ENCODE measurements at regions of chr22 and their contacts with region 1.

Region 1: DNA sequence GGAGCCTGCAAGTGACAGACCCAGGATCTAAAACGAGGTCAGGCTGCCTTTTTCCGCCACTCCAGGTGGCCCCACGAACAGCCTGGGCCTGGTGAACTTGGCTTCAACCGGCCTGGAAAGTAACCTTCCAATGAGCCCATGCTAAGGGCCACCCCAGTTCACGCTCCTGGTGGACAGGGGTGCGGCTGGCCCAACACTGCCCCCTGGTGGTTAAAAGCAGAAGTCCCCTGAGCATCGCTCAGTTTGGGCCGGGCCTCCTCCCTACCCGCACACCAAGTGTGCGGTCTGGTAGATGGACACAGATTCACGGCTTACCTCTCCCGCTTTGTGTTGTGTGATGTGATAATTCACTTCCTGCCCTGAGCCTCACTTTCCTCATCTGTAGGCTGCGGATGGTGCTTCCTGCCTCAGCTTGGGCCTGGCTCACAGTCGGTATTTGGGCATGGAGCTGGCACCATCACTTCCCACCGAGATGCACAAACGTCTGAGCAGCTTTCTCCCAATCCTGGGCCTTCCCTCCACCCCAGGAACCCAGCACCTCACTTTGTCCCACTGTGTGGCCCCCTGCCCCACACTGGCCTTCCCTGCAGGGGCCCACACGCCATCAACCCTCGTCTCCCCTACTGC is 13.7 kb upstream of the SEC14L3 start:
- DNase-seq: peak; percentile 81
- H3K4me3 Mint-ChIP-seq: no peak overlapping the region
- H3K27ac Mint-ChIP-seq: no peak overlapping the region
- H3K4me1 Mint-ChIP-seq: no peaks in the 10 kb centered on the region
- H3K27me3 Mint-ChIP-seq: peaks cover 14% of the 10 kb centered on the region

Region 2: GRCh38 chr22:30196141-30196879 is 289.2 kb before region 1 on chr22:
- CTCF ChIA-PET with region 1: no interaction called
- POLR2A ChIA-PET with region 1: no interaction called
- DNase-seq: peak; percentile 79
- H3K4me3 Mint-ChIP-seq: peak overlapping the region; percentile 42
- H3K27ac Mint-ChIP-seq: peak overlapping the region; percentile 95
- H3K4me1 Mint-ChIP-seq: peaks cover 78% of the 10 kb centered on the region
- H3K27me3 Mint-ChIP-seq: no peaks in the 10 kb centered on the region

Region 3: DNA sequence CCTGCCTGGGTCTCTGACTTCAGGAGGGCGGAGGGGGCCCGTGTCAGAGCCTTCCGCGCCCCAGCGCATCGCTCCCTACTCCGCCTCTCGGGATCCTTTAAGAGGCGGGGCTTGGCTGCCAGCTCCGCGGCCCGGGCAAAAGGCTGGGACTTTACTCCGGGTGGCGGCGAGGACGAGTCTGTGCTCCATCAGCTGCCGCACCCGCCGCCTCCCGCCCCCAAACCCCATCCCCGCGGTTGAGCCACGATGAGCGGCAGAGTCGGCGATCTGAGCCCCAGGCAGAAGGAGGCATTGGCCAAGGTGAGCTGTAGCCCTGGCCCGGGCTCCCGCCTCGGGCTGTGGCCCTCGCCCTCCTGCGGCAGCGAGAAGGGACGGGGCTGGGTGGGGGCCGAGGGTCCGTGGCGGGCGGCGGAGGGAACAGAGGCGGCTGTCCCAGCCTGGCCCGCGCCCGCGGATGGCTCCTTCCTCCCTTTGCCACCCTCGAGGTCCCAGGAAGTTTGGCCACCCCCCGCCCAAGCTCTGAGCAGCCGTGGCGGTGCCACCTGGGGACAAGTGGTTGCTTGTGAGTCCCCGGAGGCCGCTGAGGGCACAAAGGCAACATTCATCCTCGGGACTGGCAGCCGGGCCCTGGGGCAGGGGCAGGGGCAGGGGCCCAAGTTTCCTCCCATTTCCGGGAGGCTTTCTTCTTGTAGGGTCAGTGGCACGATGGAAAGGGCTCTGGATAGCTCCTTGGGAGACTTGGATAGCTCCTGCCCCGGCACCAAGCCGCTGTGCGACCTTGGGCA is 88.4 kb before region 1 on chr22 and contains the start of gene SEC14L2:
- CTCF ChIA-PET with region 1: interaction called, 10 read pairs
- POLR2A ChIA-PET with region 1: interaction called, 3 read pairs
- DNase-seq: peak; percentile 62
- H3K4me3 Mint-ChIP-seq: peak within 1 kb of the TSS; percentile 80
- H3K27ac Mint-ChIP-seq: peak within 1 kb of the TSS; percentile 35
- H3K4me1 Mint-ChIP-seq: peaks cover 38% of the 10 kb centered on the region
- H3K27me3 Mint-ChIP-seq: peaks cover 4% of the 10 kb centered on the region
- total RNA-seq, gene SEC14L2: 5.6 to 7.4 TPM

Region 4: GRCh38 chr22:30444632-30445437 is 40.6 kb before region 1 on chr22:
- CTCF ChIA-PET with region 1: interaction called, 12 read pairs
- POLR2A ChIA-PET with region 1: no interaction called
- DNase-seq: peak; percentile 69
- H3K4me3 Mint-ChIP-seq: no peak overlapping the region
- H3K27ac Mint-ChIP-seq: no peak overlapping the region
- H3K4me1 Mint-ChIP-seq: peaks cover 34% of the 10 kb centered on the region
- H3K27me3 Mint-ChIP-seq: peaks cover 31% of the 10 kb centered on the region

Measured in activated CD4-positive, alpha-beta memory T cell treated with anti-CD3 and anti-CD28 coated beads, Interleukin-2, amount 10 ng/mL, durations not matched to agents 7 days and 5 days (primary cell).